ENCODE measurements at regions of chr1 and their contacts with region 1.

Region 1: GRCh38 chr1:66503841-66504470 is 30.0 kb upstream of the SGIP1 start:
- DNase-seq: peak; percentile 53
- H3K4me3 ChIP-seq: no peak overlapping the region; a peak in 1 of 4 replicates
- H3K27ac ChIP-seq: peak overlapping the region in 1 of 2 experiments; percentile 86; a peak in 2 of 4 replicates
- H3K4me1 ChIP-seq: peaks cover 8 to 16% of the 10 kb centered on the region in 2 experiments; a peak in 3 of 4 replicates
- H3K27me3 ChIP-seq: no peaks in the 10 kb centered on the region
- CTCF ChIP-seq: peak; percentile 85
- EP300 ChIP-seq: peak in 1 of 2 experiments; percentile 46; a peak in 1 of 4 replicates
- RAD21 ChIP-seq: peak; percentile 97

Region 2: GRCh38 chr1:65958561-65959350 is 545.2 kb before region 1 on chr1:
- CTCF ChIA-PET with region 1: interaction called, 17 read pairs
- POLR2A ChIA-PET with region 1: no interaction called
- DNase-seq: peak; percentile 46
- H3K4me3 ChIP-seq: no peak overlapping the region
- H3K27ac ChIP-seq: no peak overlapping the region; a peak in 1 of 4 replicates
- H3K4me1 ChIP-seq: peaks cover 0 to 8% of the 10 kb centered on the region in 2 experiments; a peak in 1 of 4 replicates
- H3K27me3 ChIP-seq: no peaks in the 10 kb centered on the region
- CTCF ChIP-seq: peak; percentile 82
- EP300 ChIP-seq: no peak
- RAD21 ChIP-seq: peak; percentile 98

Region 3: DNA sequence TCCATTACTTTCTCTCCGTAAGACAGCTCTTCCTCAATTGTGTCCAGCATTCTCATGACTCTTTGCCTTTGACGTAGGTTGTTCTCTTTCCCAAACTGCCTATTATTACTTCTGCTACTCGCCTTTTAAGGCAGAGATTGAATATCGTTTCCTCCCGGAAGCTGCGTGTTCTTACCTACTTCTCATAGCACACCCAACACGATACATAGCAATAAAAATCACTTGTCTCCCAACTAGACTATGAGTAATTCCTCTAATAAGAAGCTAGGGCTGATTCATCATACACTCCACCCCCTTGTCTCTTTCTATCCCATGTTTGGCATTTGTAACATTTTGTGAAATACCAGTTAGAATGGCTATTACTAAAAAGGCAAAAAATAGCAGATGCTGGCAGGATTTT is 25.8 kb before region 1 on chr1:
- CTCF ChIA-PET with region 1: interaction called, 12 read pairs
- POLR2A ChIA-PET with region 1: no interaction called
- DNase-seq: no peak
- H3K4me3 ChIP-seq: peak overlapping the region in 1 of 2 experiments; percentile 13; a peak in 1 of 4 replicates
- H3K27ac ChIP-seq: peak overlapping the region; percentile 77 to 92
- H3K4me1 ChIP-seq: peaks cover 4 to 11% of the 10 kb centered on the region in 2 experiments
- H3K27me3 ChIP-seq: no peaks in the 10 kb centered on the region
- CTCF ChIP-seq: no peak
- EP300 ChIP-seq: peak; percentile 28 to 59; a peak in 2 of 4 replicates
- RAD21 ChIP-seq: no peak

Region 4: GRCh38 chr1:66521721-66522365 is 17.9 kb after region 1 on chr1:
- CTCF ChIA-PET with region 1: interaction called, 14 read pairs
- POLR2A ChIA-PET with region 1: no interaction called
- DNase-seq: no peak
- H3K4me3 ChIP-seq: no peak overlapping the region
- H3K27ac ChIP-seq: peak overlapping the region in 1 of 2 experiments; percentile 6; a peak in 2 of 4 replicates
- H3K4me1 ChIP-seq: no peaks in the 10 kb centered on the region; a peak in 2 of 4 replicates
- H3K27me3 ChIP-seq: no peaks in the 10 kb centered on the region
- CTCF ChIP-seq: no peak
- EP300 ChIP-seq: no peak; a peak in 1 of 4 replicates
- RAD21 ChIP-seq: no peak

Region 5: DNA sequence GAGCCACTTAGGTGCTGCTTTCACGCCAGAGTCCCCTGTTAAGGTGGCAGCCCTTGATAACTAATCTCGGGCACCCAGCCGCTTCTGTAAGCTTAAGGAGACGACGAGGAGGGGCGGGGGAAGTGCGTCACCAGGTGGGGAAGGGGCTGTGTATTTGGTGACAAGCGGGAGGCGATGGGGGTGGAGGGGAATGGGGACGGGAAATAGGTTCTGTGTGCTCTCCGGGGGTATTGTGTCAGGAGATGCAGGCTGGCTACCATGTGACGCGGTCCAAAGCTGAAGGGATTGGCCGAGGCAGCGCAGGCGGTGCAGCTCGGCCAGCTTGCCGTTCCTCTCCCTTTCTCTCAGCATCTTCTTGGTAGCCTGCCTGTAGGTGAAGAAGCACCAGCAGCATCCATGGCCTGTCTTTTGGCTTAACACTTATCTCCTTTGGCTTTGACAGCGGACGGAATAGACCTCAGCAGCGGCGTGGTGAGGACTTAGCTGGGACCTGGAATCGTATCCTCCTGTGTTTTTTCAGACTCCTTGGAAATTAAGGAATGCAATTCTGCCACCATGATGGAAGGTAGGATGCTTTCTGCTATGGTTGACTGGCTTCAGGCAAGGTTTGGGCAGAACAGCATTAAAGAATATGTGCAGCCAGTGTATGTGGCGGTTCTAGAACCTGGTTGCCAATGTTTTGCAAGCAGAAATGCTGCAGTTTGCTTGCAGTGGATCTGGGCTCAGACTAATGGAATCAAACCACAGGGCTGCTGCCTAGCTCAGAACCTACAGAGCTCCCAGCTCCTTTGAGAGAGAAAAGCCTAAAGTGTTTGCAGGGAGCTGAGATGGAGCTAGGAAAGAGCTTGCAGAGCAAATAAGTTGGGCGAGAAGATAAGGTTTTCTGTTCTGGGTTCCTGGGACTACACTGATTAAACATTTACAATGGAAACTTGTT is 30.1 kb after region 1 on chr1 and contains the start of gene SGIP1:
- CTCF ChIA-PET with region 1: interaction called, 13 read pairs
- POLR2A ChIA-PET with region 1: no interaction called
- DNase-seq: peak; percentile 88
- H3K4me3 ChIP-seq: peak within 1 kb of the TSS; percentile 75 to 88
- H3K27ac ChIP-seq: peak within 1 kb of the TSS; percentile 60 to 86
- H3K4me1 ChIP-seq: peaks cover 3 to 14% of the 10 kb centered on the region in 2 experiments; a peak in 3 of 4 replicates
- H3K27me3 ChIP-seq: no peaks in the 10 kb centered on the region
- CTCF ChIP-seq: no peak
- EP300 ChIP-seq: no peak
- RAD21 ChIP-seq: no peak
- polyA plus RNA-seq, gene SGIP1: 15.5 and 22.1 TPM in 2 replicates